ENCODE measurements at regions of chr19 and their contacts with region 1.

Region 1: DNA sequence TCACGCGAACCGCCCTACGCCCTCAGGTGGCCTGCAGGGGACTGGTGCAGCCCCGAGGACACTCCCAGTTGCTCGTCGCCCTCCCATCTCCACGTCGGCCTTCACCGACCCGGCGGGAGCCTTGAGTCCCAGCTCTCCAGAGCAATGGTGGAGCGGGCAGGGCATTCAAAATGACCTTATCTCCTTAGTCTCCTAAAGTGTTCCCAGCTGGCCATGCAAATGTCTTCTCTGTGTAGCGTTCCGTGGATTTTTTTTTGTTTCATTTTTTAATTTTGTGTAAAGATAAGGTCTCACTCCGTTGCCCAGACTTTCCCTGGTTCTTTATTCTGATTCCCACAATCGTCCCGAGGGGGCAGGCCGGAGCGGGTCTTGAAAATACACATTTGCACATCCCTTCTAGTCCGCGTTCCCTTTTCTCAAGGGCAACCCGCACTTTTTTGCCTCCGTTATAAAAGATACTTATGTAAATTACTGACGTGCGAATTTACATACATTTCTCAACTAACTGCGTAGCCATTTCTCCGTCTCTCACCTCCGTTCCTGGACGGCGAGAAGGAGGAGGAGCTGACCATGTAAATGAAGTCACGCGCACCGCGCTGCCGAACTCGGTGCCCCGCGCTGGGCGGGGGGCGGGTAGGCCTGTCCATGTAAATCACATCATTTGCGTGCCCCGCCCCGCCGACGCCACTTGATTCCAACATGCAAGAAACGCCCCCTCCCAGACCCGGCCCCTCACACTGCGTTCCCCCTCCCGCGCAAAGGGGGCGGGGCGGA is 581 bp upstream of the EGLN2 start:
- DNase-seq: peak; percentile 100
- ATAC-seq: peak; percentile 91

Region 2: GRCh38 chr19:40777937-40778705 is 20.3 kb before region 1 on chr19 and contains the start of gene RAB4B:
- intact Hi-C with region 1: loop called (anchors 1 kb)
- DNase-seq: peak; percentile 100
- ATAC-seq: peak; percentile 97
- total RNA-seq, gene RAB4B: 13.3 TPM

Measured in Right ventricle myocardium inferior (tissue), 1 donor.